CD8-positive, alpha-beta memory T cell (primary cell): ENCODE measurements at regions of chr11 and their contacts with region 1.

Region 1: GRCh38 chr11:63838678-63839507 is at the start of gene MARK2:
- DNase-seq: peak; percentile 99 to 100 (median 100)
- H3K4me3 ChIP-seq: peak within 1 kb of the TSS; percentile 56
- H3K4me3 Mint-ChIP-seq: peak within 1 kb of the TSS; percentile 88 to 96 (median 92)
- H3K27ac ChIP-seq: peak within 1 kb of the TSS; percentile 80
- H3K27ac Mint-ChIP-seq: peak within 1 kb of the TSS; percentile 79 to 96 (median 92)
- H3K4me1 ChIP-seq: peaks cover 36% of the 10 kb centered on the region
- H3K4me1 Mint-ChIP-seq: peaks cover 54 to 61% (median 60%) of the 10 kb centered on the region in 3 donors
- H3K27me3 ChIP-seq: no peaks in the 10 kb centered on the region
- H3K27me3 Mint-ChIP-seq: peaks cover 0 to 4% of the 10 kb centered on the region in 2 donors
- total RNA-seq, gene MARK2: 34.5 to 38.0 TPM

Region 2: GRCh38 chr11:63871962-63872799 is 33.3 kb after region 1 on chr11:
- CTCF ChIA-PET with region 1: interaction called, 16 read pairs
- POLR2A ChIA-PET with region 1: interaction called, 6 read pairs
- DNase-seq: peak in 2 of 5 donors; percentile 20 to 34
- H3K4me3 ChIP-seq: peak overlapping the region; percentile 34
- H3K4me3 Mint-ChIP-seq: peak overlapping the region in 6 of 7 donors; percentile 31 to 73 (median 56)
- H3K27ac ChIP-seq: peak overlapping the region; percentile 12
- H3K27ac Mint-ChIP-seq: peak overlapping the region in 7 of 8 donors; percentile 57 to 92 (median 75)
- H3K4me1 ChIP-seq: peaks cover 76% of the 10 kb centered on the region
- H3K4me1 Mint-ChIP-seq: peaks cover 73 to 91% (median 73%) of the 10 kb centered on the region in 3 donors
- H3K27me3 ChIP-seq: no peaks in the 10 kb centered on the region
- H3K27me3 Mint-ChIP-seq: no peaks in the 10 kb centered on the region

Region 3: DNA sequence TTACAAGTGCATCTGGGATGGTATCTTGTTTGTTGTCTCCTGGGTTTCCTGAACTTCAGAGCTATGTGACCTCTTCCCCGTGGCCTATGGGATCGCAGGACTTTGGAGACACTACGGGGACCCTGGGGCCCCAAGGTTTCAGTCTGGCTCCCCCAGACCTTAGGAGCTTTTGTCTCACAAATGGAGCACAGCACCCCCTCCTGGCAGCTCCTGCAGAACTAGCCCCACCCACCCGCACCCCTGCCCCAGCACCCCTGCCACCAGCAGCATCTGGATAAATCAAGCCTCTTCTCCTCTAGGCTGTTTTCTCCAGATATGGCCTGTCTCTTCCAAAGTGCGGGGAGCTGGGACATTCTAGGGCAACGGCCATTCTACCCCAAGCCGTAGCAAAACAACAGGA is 67.7 kb after region 1 on chr11:
- CTCF ChIA-PET with region 1: interaction called, 34 read pairs
- POLR2A ChIA-PET with region 1: interaction called, 3 read pairs
- DNase-seq: peak; percentile 34 to 74 (median 47)
- H3K4me3 ChIP-seq: no peak overlapping the region
- H3K4me3 Mint-ChIP-seq: no peak overlapping the region
- H3K27ac ChIP-seq: no peak overlapping the region
- H3K27ac Mint-ChIP-seq: peak overlapping the region in 3 of 8 donors; percentile 30 to 47 (median 34)
- H3K4me1 ChIP-seq: no peaks in the 10 kb centered on the region
- H3K4me1 Mint-ChIP-seq: peaks cover 2 to 6% (median 2%) of the 10 kb centered on the region in 3 donors
- H3K27me3 ChIP-seq: no peaks in the 10 kb centered on the region
- H3K27me3 Mint-ChIP-seq: no peaks in the 10 kb centered on the region

Region 4: GRCh38 chr11:63938479-63939396 is 99.8 kb after region 1 on chr11 and contains the start of gene NAA40:
- CTCF ChIA-PET with region 1: interaction called, 225 read pairs
- POLR2A ChIA-PET with region 1: interaction called, 4 read pairs
- DNase-seq: peak; percentile 86 to 96 (median 94)
- H3K4me3 ChIP-seq: peak within 1 kb of the TSS; percentile 87
- H3K4me3 Mint-ChIP-seq: peak within 1 kb of the TSS; percentile 85 to 92 (median 89)
- H3K27ac ChIP-seq: peak within 1 kb of the TSS; percentile 59
- H3K27ac Mint-ChIP-seq: peak within 1 kb of the TSS; percentile 64 to 97 (median 93)
- H3K4me1 ChIP-seq: peaks cover 15% of the 10 kb centered on the region
- H3K4me1 Mint-ChIP-seq: peaks cover 22 to 27% (median 26%) of the 10 kb centered on the region in 3 donors
- H3K27me3 ChIP-seq: no peaks in the 10 kb centered on the region
- H3K27me3 Mint-ChIP-seq: no peaks in the 10 kb centered on the region
- total RNA-seq, gene NAA40: 20.2 to 26.2 TPM

Region 5: GRCh38 chr11:64000026-64000739 is 161.3 kb after region 1 on chr11:
- CTCF ChIA-PET with region 1: interaction called, 17 read pairs
- POLR2A ChIA-PET with region 1: no interaction called
- DNase-seq: peak; percentile 67 to 78 (median 70)
- H3K4me3 ChIP-seq: no peak overlapping the region
- H3K4me3 Mint-ChIP-seq: peak overlapping the region in 5 of 7 donors; percentile 54 to 84 (median 60)
- H3K27ac ChIP-seq: no peak overlapping the region
- H3K27ac Mint-ChIP-seq: peak overlapping the region in 1 of 8 donors; percentile 33
- H3K4me1 ChIP-seq: peaks cover 7% of the 10 kb centered on the region
- H3K4me1 Mint-ChIP-seq: peaks cover 0 to 24% (median 4%) of the 10 kb centered on the region in 3 donors
- H3K27me3 ChIP-seq: no peaks in the 10 kb centered on the region
- H3K27me3 Mint-ChIP-seq: no peaks in the 10 kb centered on the region